ENCODE measurements at regions of chr22 and their contacts with region 1.

Region 1: GRCh38 chr22:31148953-31149627 is 8.8 kb upstream of the PLA2G3 start:
- DNase-seq: peak; percentile 78
- H3K4me3 Mint-ChIP-seq: no peak overlapping the region
- H3K27ac Mint-ChIP-seq: no peak overlapping the region
- H3K4me1 Mint-ChIP-seq: peaks cover 10% of the 10 kb centered on the region
- H3K27me3 Mint-ChIP-seq: no peaks in the 10 kb centered on the region
- CTCF ChIP-seq: peak; percentile 89

Region 2: DNA sequence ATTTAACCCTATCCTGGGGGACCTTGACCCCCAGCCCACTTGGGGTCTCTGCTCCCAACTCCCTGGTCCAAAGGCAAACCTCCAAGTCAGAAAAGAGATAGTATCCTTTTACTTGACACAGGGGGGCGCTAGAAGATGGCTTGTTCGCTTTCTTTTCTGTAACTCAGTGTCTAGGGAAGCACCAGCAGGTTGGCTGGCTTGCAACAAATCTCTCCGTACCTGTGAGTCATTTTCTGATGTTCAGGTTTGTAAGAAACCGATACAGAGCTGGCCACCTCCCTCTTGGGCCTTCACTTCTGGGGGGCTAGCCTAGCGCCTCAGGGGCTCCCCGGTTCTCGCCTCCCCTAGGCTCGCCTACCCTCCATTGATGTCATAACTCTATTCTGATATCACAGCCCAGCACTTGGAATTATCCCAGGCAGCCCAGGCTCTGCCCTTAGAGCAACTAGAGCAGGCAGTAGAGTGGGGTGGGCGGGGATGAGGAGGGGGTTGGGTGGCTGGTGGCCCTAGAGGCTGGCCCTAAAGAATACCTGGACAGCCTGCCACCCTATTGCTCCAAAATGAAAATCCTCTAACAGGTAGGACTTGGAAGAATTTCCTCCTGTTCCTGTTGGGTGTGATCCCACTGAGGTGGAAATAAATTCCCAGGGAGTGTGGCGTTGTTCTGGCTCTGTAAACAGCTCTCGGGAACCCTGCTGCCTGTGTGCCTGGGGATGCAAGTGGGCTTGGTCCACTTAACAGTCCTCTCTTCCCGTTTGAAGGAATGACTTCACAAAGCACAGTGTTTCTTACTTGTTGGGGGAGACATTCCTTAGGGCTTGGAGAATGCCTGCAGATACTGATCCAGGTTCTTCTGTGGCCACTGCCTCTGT is 385.0 kb before region 1 on chr22:
- CTCF ChIA-PET with region 1: no interaction called
- intact Hi-C with region 1: loop called (anchors 2 kb)
- DNase-seq: peak; percentile 74
- H3K4me3 Mint-ChIP-seq: no peak overlapping the region
- H3K27ac Mint-ChIP-seq: no peak overlapping the region
- H3K4me1 Mint-ChIP-seq: peaks cover 8% of the 10 kb centered on the region
- H3K27me3 Mint-ChIP-seq: no peaks in the 10 kb centered on the region
- CTCF ChIP-seq: peak; percentile 79

Region 3: GRCh38 chr22:30947816-30948454 is 201.2 kb before region 1 on chr22:
- CTCF ChIA-PET with region 1: no interaction called
- intact Hi-C with region 1: loop called (anchors 2 kb)
- DNase-seq: no peak
- H3K4me3 Mint-ChIP-seq: no peak overlapping the region
- H3K27ac Mint-ChIP-seq: no peak overlapping the region
- H3K4me1 Mint-ChIP-seq: no peaks in the 10 kb centered on the region
- H3K27me3 Mint-ChIP-seq: no peaks in the 10 kb centered on the region
- CTCF ChIP-seq: no peak

Region 4: GRCh38 chr22:31001124-31001770 is 147.8 kb before region 1 on chr22:
- CTCF ChIA-PET with region 1: interaction called, 12 read pairs
- intact Hi-C with region 1: no loop called
- DNase-seq: no peak
- H3K4me3 Mint-ChIP-seq: no peak overlapping the region
- H3K27ac Mint-ChIP-seq: no peak overlapping the region
- H3K4me1 Mint-ChIP-seq: no peaks in the 10 kb centered on the region
- H3K27me3 Mint-ChIP-seq: peaks cover 12% of the 10 kb centered on the region
- CTCF ChIP-seq: no peak

Region 5: GRCh38 chr22:31107178-31107893 is 41.8 kb before region 1 on chr22 and contains the start of gene SELENOM:
- CTCF ChIA-PET with region 1: interaction called, 12 read pairs
- intact Hi-C with region 1: loop called (anchors 1 kb)
- DNase-seq: peak; percentile 90
- H3K4me3 Mint-ChIP-seq: peak within 1 kb of the TSS; percentile 66
- H3K27ac Mint-ChIP-seq: peak within 1 kb of the TSS; percentile 71
- H3K4me1 Mint-ChIP-seq: no peaks in the 10 kb centered on the region
- H3K27me3 Mint-ChIP-seq: no peaks in the 10 kb centered on the region
- CTCF ChIP-seq: peak; percentile 80
- total RNA-seq, gene SELENOM: 2.5 TPM in 1 of 2 replicates, not detected in the other

Region 6: DNA sequence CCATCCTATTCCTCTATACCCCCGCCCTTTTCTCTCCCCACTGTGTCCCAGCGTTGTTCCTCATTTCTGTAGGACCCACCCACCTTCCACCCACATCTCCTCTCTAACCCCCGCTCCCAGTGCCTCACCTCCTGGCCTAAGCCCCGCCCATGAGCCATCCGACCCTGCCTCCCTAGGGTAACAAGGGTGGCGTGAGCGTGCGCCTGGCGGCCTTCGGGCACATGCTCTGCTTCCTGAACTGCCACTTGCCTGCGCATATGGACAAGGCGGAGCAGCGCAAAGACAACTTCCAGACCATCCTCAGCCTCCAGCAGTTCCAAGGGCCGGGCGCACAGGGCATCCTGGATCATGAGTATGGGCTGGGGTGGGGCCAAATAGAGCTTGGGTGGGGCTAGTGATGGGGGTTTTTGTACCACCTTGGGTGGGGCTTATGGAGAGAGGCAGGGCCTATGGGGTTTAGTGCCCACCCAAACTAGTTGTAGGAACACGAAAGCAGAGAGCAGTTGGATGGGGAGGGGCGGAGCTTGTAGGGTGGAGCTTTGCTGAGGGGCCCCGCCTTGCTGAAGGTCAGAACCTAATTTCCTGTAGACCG is 21.8 kb before region 1 on chr22:
- CTCF ChIA-PET with region 1: no interaction called
- intact Hi-C with region 1: no loop called
- DNase-seq: no peak
- H3K4me3 Mint-ChIP-seq: no peak overlapping the region
- H3K27ac Mint-ChIP-seq: no peak overlapping the region
- H3K4me1 Mint-ChIP-seq: peaks cover 24% of the 10 kb centered on the region
- H3K27me3 Mint-ChIP-seq: peaks cover 16% of the 10 kb centered on the region
- CTCF ChIP-seq: no peak